ENCODE measurements at regions of chr5 and their contacts with region 1.

Region 1: DNA sequence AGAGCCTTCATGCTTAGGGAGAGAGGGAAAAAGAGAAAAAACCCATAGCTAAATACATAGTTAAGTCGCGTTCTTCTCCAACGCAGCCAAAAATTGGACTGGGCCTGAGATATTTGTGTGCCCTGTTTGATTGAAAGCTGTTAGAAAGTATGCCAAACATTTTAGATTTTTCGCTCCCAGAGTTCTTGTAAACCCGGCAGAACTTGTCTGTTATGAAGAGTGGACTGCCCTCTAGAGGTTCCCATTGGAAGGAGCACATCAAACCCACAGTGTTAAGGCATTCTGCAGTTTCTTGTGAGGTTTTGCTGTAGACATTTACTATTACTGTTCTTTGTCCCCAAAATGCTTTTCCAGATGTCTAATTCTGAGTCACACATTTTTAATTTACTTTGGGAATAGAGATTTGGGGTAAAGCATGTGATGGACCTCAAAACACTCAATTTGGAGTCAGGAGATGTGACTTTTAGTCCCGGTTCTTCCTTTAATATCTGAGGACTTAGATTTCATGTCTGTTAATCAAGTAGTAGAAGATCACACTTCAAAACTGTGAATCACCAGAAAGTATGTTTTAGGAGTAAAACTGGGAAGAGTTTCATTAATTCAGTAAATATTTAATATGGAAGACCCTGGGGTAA is 96.6 kb downstream of the PCSK1 start:
- DNase-seq: peak in 4 of 5 donors; percentile 40 to 61 (median 56)
- ATAC-seq: peak; percentile 36 to 84 (median 75)
- H3K4me3 ChIP-seq: no peak overlapping the region
- H3K27ac ChIP-seq: peak overlapping the region in 8 of 12 donors; percentile 35 to 77 (median 48)
- H3K4me1 ChIP-seq: peaks cover 0 to 50% (median 10%) of the 10 kb centered on the region in 12 donors
- H3K27me3 ChIP-seq: no peaks in the 10 kb centered on the region
- CTCF ChIP-seq: peak; percentile 73 to 95 (median 85)
- POLR2A ChIP-seq: no peak

Region 2: GRCh38 chr5:95646554-95647431 is 689.7 kb before region 1 on chr5 and contains the start of gene RFESD:
- intact Hi-C with region 1: loop called in 4 of 10 experiments (anchors 5 to 10 kb)
- DNase-seq: peak; percentile 96 to 100 (median 99)
- ATAC-seq: peak; percentile 99 to 100 (median 99)
- H3K4me3 ChIP-seq: peak within 1 kb of the TSS; percentile 28 to 76 (median 64)
- H3K27ac ChIP-seq: peak within 1 kb of the TSS; percentile 89 to 99 (median 95)
- H3K4me1 ChIP-seq: peaks cover 0 to 25% (median 9%) of the 10 kb centered on the region in 12 donors
- H3K27me3 ChIP-seq: no peaks in the 10 kb centered on the region
- CTCF ChIP-seq: peak in 5 of 12 donors; percentile 2 to 31 (median 11)
- POLR2A ChIP-seq: peak; percentile 88 to 94
- total RNA-seq, gene RFESD: 1.3 to 4.6 (median 3.5) TPM

Region 3: DNA sequence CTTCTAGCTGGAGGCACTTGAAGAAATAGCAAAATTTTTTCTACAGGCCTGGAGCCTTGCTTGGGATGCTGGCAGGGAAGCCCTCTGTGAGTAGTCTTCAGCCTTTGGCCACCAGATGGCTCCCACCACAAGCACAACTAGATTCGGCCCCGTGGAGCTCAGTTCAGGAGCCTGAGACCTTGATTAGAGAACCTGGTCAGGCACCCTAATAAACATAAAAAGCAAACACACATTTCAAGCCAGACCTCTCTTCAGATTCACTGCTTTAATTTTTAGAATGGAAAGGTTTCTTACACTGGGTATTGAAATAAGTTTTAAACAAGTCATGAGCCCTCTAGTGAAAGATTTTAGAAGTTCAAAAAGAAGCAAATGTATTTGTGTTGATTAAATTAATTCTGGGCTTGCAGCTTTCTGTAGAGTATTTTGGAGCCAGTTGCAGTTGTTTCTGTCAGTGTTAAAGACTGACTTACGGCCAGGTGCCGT is 555.3 kb before region 1 on chr5:
- intact Hi-C with region 1: loop called in 6 of 10 experiments (anchors 5 to 10 kb)
- DNase-seq: peak; percentile 80 to 88 (median 82)
- ATAC-seq: peak; percentile 78 to 93 (median 92)
- H3K4me3 ChIP-seq: no peak overlapping the region
- H3K27ac ChIP-seq: peak overlapping the region; percentile 11 to 77 (median 30)
- H3K4me1 ChIP-seq: peaks cover 0 to 52% (median 20%) of the 10 kb centered on the region in 12 donors
- H3K27me3 ChIP-seq: no peaks in the 10 kb centered on the region
- CTCF ChIP-seq: peak; percentile 73 to 97 (median 88)
- POLR2A ChIP-seq: no peak

Region 4: GRCh38 chr5:95892780-95893354 is 443.6 kb before region 1 on chr5:
- intact Hi-C with region 1: loop called in 5 of 10 experiments (anchors 2 to 10 kb)
- DNase-seq: no peak
- ATAC-seq: peak in 2 of 4 donors; percentile 42 to 59
- H3K4me3 ChIP-seq: no peak overlapping the region
- H3K27ac ChIP-seq: no peak overlapping the region
- H3K4me1 ChIP-seq: peaks cover 0 to 22% (median 3%) of the 10 kb centered on the region in 12 donors
- H3K27me3 ChIP-seq: no peaks in the 10 kb centered on the region
- CTCF ChIP-seq: peak in 11 of 12 donors; percentile 18 to 52 (median 35)
- POLR2A ChIP-seq: no peak

Region 5: GRCh38 chr5:95986001-95986400 is 350.5 kb before region 1 on chr5:
- intact Hi-C with region 1: loop called in 1 of 10 experiments (anchors 5 kb)
- DNase-seq: no peak
- ATAC-seq: peak in 1 of 4 donors; percentile 36
- H3K4me3 ChIP-seq: no peak overlapping the region
- H3K27ac ChIP-seq: peak overlapping the region in 3 of 12 donors; percentile 20 to 39 (median 21)
- H3K4me1 ChIP-seq: peaks cover 0 to 28% (median 8%) of the 10 kb centered on the region in 12 donors
- H3K27me3 ChIP-seq: no peaks in the 10 kb centered on the region
- CTCF ChIP-seq: no peak
- POLR2A ChIP-seq: no peak

Region 6: DNA sequence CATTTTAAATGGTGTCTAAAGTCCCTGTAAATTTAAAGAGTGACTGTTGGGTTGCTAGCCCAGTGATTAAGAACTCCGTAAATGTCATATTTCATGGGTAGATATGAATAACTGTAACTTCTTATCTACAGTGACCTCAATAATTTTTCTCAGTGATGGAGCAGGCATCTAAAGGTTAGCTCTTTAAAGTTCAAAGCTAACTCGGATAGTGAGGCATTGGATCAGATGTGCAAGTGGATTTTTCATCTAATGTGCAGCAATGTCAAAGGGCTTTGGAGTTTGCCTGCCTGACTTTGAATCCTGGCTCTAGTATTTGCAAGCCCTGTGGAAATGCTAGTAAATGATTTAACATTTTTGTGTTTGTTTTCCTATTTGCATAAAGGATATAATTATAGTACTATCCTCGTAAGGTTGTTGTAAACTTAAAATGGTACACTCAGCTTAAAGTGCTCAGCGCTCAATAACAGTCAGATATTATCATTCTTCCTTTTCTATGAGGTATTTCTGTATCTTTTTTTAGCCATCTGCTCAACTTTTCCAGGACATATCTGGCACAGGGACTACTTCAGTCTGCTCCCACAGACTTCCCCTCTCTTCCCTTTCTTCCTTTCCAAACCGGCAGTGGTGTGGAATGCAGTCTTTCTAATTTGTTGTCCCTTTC is 211.1 kb before region 1 on chr5:
- intact Hi-C with region 1: loop called in 4 of 10 experiments (anchors 10 kb)
- DNase-seq: no peak
- ATAC-seq: peak; percentile 76 to 88 (median 86)
- H3K4me3 ChIP-seq: peak overlapping the region in 9 of 12 donors; percentile 19 to 40 (median 27)
- H3K27ac ChIP-seq: peak overlapping the region in 9 of 12 donors; percentile 10 to 64 (median 29)
- H3K4me1 ChIP-seq: peaks cover 0 to 18% (median 12%) of the 10 kb centered on the region in 12 donors
- H3K27me3 ChIP-seq: no peaks in the 10 kb centered on the region
- CTCF ChIP-seq: no peak
- POLR2A ChIP-seq: no peak

Measured in heart left ventricle (tissue), 16 donors.